ENCODE measurements at regions of chr1 and their contacts with region 1.

Region 1: GRCh38 chr1:47432071-47433036 is 5.5 kb upstream of the FOXD2 start:
- DNase-seq: no peak
- H3K4me3 ChIP-seq: peak overlapping the region; percentile 25
- H3K27ac ChIP-seq: peak overlapping the region; percentile 82
- H3K27me3 ChIP-seq: no peaks in the 10 kb centered on the region
- CTCF ChIP-seq: peak; percentile 88

Region 2: GRCh38 chr1:47367651-47368050 is 64.7 kb before region 1 on chr1:
- CTCF ChIA-PET with region 1: interaction called, 12 read pairs
- POLR2A ChIA-PET with region 1: no interaction called
- DNase-seq: no peak
- H3K4me3 ChIP-seq: no peak overlapping the region
- H3K27ac ChIP-seq: no peak overlapping the region
- H3K27me3 ChIP-seq: no peaks in the 10 kb centered on the region
- CTCF ChIP-seq: no peak

Region 3: GRCh38 chr1:47409311-47410070 is 22.9 kb before region 1 on chr1:
- CTCF ChIA-PET with region 1: interaction called, 31 read pairs
- POLR2A ChIA-PET with region 1: no interaction called
- DNase-seq: peak; percentile 51
- H3K4me3 ChIP-seq: no peak overlapping the region
- H3K27ac ChIP-seq: peak overlapping the region; percentile 47
- H3K27me3 ChIP-seq: peaks cover 4% of the 10 kb centered on the region
- CTCF ChIP-seq: no peak

Region 4: GRCh38 chr1:47416319-47417169 is 15.8 kb before region 1 on chr1:
- CTCF ChIA-PET with region 1: interaction called, 96 read pairs
- POLR2A ChIA-PET with region 1: interaction called, 4 read pairs
- DNase-seq: no peak
- H3K4me3 ChIP-seq: peak overlapping the region; percentile 45
- H3K27ac ChIP-seq: no peak overlapping the region
- H3K27me3 ChIP-seq: peaks cover 43% of the 10 kb centered on the region
- CTCF ChIP-seq: no peak

Region 5: DNA sequence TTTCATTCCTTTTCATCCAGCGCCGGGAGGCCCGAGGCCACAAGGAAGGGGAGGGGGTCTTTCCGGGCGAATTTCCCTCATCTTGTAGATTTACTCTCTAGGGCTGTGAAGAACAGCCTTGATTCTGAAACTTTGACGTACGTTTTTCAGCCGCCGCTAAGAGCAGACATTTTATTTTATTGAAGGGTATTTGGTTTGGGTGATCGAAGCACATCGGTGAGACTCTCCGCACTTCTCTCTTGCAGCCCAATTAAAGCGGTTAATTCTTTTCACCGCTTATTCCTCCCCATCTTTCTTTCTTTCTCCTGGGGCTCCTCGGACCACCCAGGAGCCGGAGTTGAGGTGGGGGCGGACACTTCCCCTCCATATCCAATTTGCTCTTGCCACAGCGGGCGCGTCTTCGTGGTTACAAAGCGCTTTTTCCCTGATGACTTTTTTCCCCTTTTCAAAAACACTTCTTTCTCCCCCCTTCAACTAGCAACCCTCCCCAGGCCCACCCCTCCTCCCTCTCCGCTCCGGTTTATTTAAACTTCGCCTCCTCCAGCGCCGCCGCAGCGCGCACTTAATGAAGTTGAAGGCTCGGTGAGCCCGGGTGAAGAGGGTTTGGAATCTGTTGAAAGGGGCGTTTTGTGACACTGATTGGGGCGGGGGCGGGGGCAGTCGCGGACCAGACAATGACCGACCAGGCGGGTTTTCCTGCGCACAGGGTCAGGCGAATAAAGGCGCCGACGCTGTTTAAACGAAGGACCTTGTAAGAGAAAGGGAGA is 11.4 kb after region 1 on chr1:
- CTCF ChIA-PET with region 1: interaction called, 44 read pairs
- POLR2A ChIA-PET with region 1: no interaction called
- DNase-seq: no peak
- H3K4me3 ChIP-seq: no peak overlapping the region
- H3K27ac ChIP-seq: no peak overlapping the region
- H3K27me3 ChIP-seq: peaks cover 90% of the 10 kb centered on the region
- CTCF ChIP-seq: no peak

Region 6: GRCh38 chr1:47720111-47720510 is 287.8 kb after region 1 on chr1:
- CTCF ChIA-PET with region 1: interaction called, 243 read pairs
- POLR2A ChIA-PET with region 1: no interaction called
- DNase-seq: no peak
- H3K4me3 ChIP-seq: no peak overlapping the region
- H3K27ac ChIP-seq: no peak overlapping the region
- H3K27me3 ChIP-seq: peaks cover 27% of the 10 kb centered on the region
- CTCF ChIP-seq: no peak

Region 7: DNA sequence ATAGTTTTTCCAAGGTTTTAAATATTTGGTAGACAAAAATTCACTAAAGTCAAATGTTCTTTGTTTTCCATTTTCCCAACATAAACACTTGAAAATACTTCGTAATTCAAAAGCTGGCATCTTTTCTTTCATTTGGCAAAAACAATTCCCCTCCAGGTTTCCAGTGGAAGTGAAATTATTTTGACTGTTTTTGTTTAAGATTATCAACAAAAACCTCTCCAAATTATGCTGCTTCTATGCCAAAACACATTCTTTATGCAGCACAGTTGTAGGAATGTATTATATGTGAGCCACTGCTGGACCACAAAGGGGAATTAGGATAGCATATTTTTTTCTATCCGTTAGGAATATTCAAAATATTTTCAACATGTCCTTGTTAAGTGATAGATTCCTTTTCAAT is 834.2 kb after region 1 on chr1:
- CTCF ChIA-PET with region 1: no interaction called
- POLR2A ChIA-PET with region 1: no interaction called
- DNase-seq: no peak
- H3K4me3 ChIP-seq: no peak overlapping the region
- H3K27ac ChIP-seq: no peak overlapping the region
- H3K27me3 ChIP-seq: no peaks in the 10 kb centered on the region
- CTCF ChIP-seq: no peak